Activated CD4-positive, alpha-beta T cell treated with anti-CD3 and anti-CD28 coated beads for 36 hours (primary cell): ENCODE measurements at regions of chr2 and their contacts with region 1.

Region 1: GRCh38 chr2:179106676-179107428 is 56.9 kb upstream of the CCDC141 start:
- DNase-seq: peak; percentile 30
- ATAC-seq: peak; percentile 50
- H3K4me3 Mint-ChIP-seq: no peak overlapping the region
- H3K27ac Mint-ChIP-seq: peak overlapping the region; percentile 12
- H3K4me1 Mint-ChIP-seq: peaks cover 31% of the 10 kb centered on the region
- H3K27me3 Mint-ChIP-seq: no peaks in the 10 kb centered on the region

Region 2: DNA sequence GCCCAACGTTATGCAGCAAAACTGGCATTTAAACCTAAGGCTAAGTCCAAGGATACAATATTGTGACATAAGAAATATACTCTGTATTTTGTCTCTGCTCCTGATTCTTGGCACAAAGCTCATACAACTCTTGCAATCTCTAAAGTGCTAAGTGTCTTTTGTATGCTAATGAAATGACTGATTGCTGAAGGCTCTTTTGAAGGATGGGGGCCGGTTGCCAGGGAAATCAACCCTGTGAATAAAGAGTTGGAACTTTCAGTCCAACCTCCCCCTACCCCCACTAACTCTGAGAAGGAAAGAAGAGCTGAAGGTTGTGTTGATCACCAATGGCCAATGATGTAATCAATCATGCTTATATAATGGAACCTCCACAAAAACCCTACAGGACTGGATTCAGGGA is 117.5 kb after region 1 on chr2:
- CTCF ChIA-PET with region 1: no interaction called
- POLR2A ChIA-PET with region 1: interaction called, 10 read pairs
- intact Hi-C with region 1: no loop called
- DNase-seq: no peak
- ATAC-seq: no peak
- H3K4me3 Mint-ChIP-seq: no peak overlapping the region
- H3K27ac Mint-ChIP-seq: no peak overlapping the region
- H3K4me1 Mint-ChIP-seq: no peaks in the 10 kb centered on the region
- H3K27me3 Mint-ChIP-seq: no peaks in the 10 kb centered on the region